Heart left ventricle (tissue), 16 donors: ENCODE measurements at regions of chr9 and their contacts with region 1.

Region 1: GRCh38 chr9:121621113-121621449 is 30.4 kb upstream of the DAB2IP start:
- DNase-seq: peak in 1 of 5 donors; percentile 26
- ATAC-seq: peak in 1 of 4 donors; percentile 6
- H3K4me3 ChIP-seq: no peak overlapping the region
- H3K27ac ChIP-seq: peak overlapping the region in 9 of 12 donors; percentile 13 to 84 (median 77)
- H3K4me1 ChIP-seq: peaks cover 3 to 78% (median 46%) of the 10 kb centered on the region in 12 donors
- H3K27me3 ChIP-seq: no peaks in the 10 kb centered on the region
- CTCF ChIP-seq: peak in 11 of 12 donors; percentile 13 to 62 (median 39)
- POLR2A ChIP-seq: no peak

Region 2: DNA sequence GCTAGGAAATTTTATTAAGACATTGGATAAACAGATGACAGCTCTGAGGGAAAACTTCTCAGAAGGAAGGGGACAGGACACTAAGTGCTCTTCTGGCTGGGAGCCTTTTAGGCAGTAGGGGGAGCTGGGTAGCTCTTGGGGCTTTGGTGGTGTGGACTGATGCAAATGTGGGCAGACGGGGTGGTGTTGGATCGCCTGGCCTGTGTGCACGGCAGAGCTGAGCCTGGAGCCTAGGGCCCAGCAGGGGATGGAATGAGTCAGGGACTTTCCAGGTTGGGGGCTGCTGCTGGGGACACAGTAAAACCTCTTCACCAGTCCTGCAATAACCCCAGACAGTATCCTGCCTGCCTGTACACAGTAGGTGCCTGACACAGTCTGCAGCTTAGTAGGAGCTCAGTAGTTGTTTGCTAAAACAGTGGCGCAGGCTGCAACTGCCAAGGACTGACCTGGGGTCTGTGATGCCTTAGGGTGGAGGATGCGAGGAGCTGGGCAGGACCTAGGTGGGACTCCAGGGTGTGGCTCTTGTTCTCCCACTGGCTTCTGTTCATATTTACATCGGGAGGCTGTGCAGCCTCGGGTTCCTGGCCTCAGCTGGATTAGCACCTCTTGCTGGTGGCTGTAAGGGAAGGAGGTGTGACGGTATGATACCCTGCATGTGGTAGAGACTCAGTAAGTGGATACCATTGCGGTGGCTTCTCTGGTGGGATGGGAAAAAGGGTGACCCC is 114.1 kb after region 1 on chr9:
- intact Hi-C with region 1: loop called in 1 of 10 experiments (anchors 2 kb)
- DNase-seq: no peak
- ATAC-seq: peak in 3 of 4 donors; percentile 4 to 19 (median 14)
- H3K4me3 ChIP-seq: peak overlapping the region in 9 of 12 donors; percentile 16 to 70 (median 59)
- H3K27ac ChIP-seq: peak overlapping the region; percentile 66 to 99 (median 90)
- H3K4me1 ChIP-seq: peaks cover 21 to 95% (median 84%) of the 10 kb centered on the region in 12 donors
- H3K27me3 ChIP-seq: peaks cover 0 to 10% (median 0%) of the 10 kb centered on the region in 9 donors
- CTCF ChIP-seq: peak; percentile 15 to 53 (median 29)
- POLR2A ChIP-seq: no peak